ENCODE measurements at regions of chr16 and their contacts with region 1.

Region 1: GRCh38 chr16:21698169-21699032 is 34.6 kb downstream of the OTOA start:
- DNase-seq: no peak
- ATAC-seq: peak; percentile 30; the same call in 2 of the 3 replicates
- H3K4me3 ChIP-seq: no peak overlapping the region
- H3K27ac ChIP-seq: no peak overlapping the region
- H3K4me1 ChIP-seq: peaks cover 3% of the 10 kb centered on the region; the same call in 1 of the 2 replicates
- H3K27me3 ChIP-seq: no peaks in the 10 kb centered on the region; a peak in 2 of 4 replicates
- CTCF ChIP-seq: peak in 1 of 3 experiments; percentile 17; a peak in 1 of 6 replicates
- EP300 ChIP-seq: no peak
- POLR2A ChIP-seq: no peak
- RAD21 ChIP-seq: peak; percentile 23; the same call in 1 of the 2 replicates

Region 2: GRCh38 chr16:21684199-21684598 is 14.2 kb before region 1 on chr16:
- CTCF ChIA-PET with region 1: interaction called, 16 read pairs
- POLR2A ChIA-PET with region 1: interaction called, 3 read pairs
- RAD21 ChIA-PET with region 1: no interaction called
- SMC1A ChIA-PET with region 1: interaction called, 4 read pairs
- in situ Hi-C with region 1: no loop called
- intact Hi-C with region 1: no loop called
- DNase-seq: no peak
- ATAC-seq: peak; percentile 87
- H3K4me3 ChIP-seq: no peak overlapping the region
- H3K27ac ChIP-seq: no peak overlapping the region
- H3K4me1 ChIP-seq: no peaks in the 10 kb centered on the region
- H3K27me3 ChIP-seq: no peaks in the 10 kb centered on the region
- CTCF ChIP-seq: peak; percentile 16 to 62 (median 54); a peak in 5 of 6 replicates
- EP300 ChIP-seq: no peak
- POLR2A ChIP-seq: no peak
- RAD21 ChIP-seq: no peak

Measured in GM12878 (cell line).